ENCODE measurements at regions of chr20 and their contacts with region 1.

Region 1: DNA sequence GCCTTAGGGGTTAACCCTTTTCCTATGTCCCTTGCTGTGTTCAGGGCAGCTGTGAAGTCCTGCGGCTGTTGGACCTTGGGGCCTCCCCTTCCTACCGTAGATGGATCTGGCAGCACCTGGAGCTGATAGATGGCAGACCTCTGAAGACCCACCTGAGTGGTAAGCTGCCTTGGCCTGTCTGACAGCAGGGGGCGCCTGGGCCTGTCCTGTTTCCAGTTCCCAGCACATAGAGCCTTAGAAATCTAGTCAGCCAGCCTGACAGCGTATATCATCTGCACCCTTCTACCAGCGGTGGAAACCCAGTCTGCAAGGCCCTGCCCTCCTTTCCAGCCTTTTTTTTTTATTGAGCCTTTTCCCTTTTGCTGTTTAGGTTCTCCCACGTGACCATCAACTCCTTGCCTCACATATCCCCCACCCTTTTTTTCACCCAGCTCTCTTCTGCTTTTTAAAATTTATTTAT is 26.6 kb downstream of the CNBD2 start:
- DNase-seq: peak; percentile 84
- ATAC-seq: peak; percentile 95
- H3K4me3 ChIP-seq: no peak overlapping the region
- H3K27ac ChIP-seq: no peak overlapping the region
- H3K4me1 ChIP-seq: peaks cover 2 to 23% of the 10 kb centered on the region in 2 experiments; a peak in 3 of 4 replicates
- H3K27me3 ChIP-seq: no peaks in the 10 kb centered on the region
- CTCF ChIP-seq: peak; percentile 94 to 95 (median 95)
- POLR2A ChIP-seq: no peak
- RAD21 ChIP-seq: peak; percentile 97

Region 2: GRCh38 chr20:35741892-35742740 is 252.9 kb before region 1 on chr20 and contains the start of gene RBM39:
- CTCF ChIA-PET with region 1: interaction called, 10 read pairs
- POLR2A ChIA-PET with region 1: interaction called, 7 read pairs
- RAD21 ChIA-PET with region 1: no interaction called
- intact Hi-C with region 1: no loop called
- DNase-seq: peak; percentile 100
- ATAC-seq: peak; percentile 94
- H3K4me3 ChIP-seq: peak within 1 kb of the TSS; percentile 77 to 97
- H3K27ac ChIP-seq: peak within 1 kb of the TSS; percentile 91
- H3K4me1 ChIP-seq: peaks cover 10 to 28% of the 10 kb centered on the region in 2 experiments
- H3K27me3 ChIP-seq: no peaks in the 10 kb centered on the region
- CTCF ChIP-seq: peak in 1 of 3 experiments; percentile 38; a peak in 1 of 6 replicates
- POLR2A ChIP-seq: peak; percentile 70
- RAD21 ChIP-seq: no peak
- total RNA-seq, gene RBM39: 234 TPM

Region 3: DNA sequence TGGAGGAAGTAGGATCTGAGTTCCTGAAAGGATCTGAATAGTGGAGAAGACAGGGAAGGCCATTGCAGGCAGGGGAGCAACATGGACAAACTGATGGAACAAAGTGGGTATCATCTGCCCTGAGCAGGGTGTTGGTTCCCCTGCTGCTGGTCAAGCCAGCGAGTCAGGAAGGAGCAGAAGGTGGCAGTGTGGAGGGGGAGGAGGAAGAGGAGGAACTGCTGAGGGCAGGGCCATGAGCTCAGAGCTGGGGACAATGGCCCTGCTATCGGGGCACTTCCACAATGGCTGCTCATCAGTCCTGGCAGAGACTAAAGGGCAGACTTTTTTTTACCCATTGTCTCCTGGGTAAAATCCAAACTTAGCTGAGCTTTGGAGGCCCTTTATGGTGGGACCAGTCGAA is 13.1 kb before region 1 on chr20:
- CTCF ChIA-PET with region 1: interaction called, 15 read pairs
- POLR2A ChIA-PET with region 1: no interaction called
- RAD21 ChIA-PET with region 1: no interaction called
- intact Hi-C with region 1: no loop called
- DNase-seq: no peak
- ATAC-seq: peak; percentile 50; the same call in 1 of the 2 replicates
- H3K4me3 ChIP-seq: no peak overlapping the region
- H3K27ac ChIP-seq: no peak overlapping the region
- H3K4me1 ChIP-seq: peaks cover 0 to 5% of the 10 kb centered on the region in 2 experiments; a peak in 2 of 4 replicates
- H3K27me3 ChIP-seq: no peaks in the 10 kb centered on the region
- CTCF ChIP-seq: no peak
- POLR2A ChIP-seq: no peak
- RAD21 ChIP-seq: no peak

Region 4: DNA sequence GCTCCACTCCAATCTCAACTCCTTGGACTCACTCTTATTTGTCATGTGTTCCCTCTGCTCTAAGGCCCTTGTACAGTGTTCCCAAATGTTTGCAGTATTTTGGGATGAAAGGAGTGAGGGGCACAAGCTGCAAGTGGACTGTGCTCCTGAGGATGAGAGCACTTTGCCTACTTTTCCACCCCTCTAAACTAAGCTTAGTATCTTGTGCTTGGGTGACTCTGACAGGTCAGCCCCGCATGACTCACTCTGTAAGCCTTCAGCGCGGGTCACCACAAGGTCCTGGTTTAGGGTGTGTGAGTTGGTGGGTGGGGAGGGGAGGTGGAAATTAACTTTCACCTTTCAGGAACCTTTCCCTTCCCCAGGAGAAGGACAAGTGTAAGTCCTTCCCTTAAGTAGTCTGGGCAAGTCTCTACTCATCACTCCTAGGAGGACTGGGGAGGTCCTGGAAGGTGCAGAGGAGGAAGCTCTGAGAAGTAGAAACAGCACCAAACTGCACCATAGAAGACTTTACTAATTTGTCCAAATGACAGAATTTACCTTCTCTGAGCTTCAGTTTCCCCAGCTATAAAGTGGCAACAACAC is 90.8 kb after region 1 on chr20:
- CTCF ChIA-PET with region 1: interaction called, 10 read pairs
- POLR2A ChIA-PET with region 1: interaction called, 4 read pairs
- RAD21 ChIA-PET with region 1: interaction called in 1 of 2 experiments, 3 read pairs
- intact Hi-C with region 1: no loop called
- DNase-seq: peak; percentile 84
- ATAC-seq: peak; percentile 83
- H3K4me3 ChIP-seq: peak overlapping the region; percentile 8 to 46
- H3K27ac ChIP-seq: peak overlapping the region; percentile 96
- H3K4me1 ChIP-seq: peaks cover 56 to 79% of the 10 kb centered on the region in 2 experiments
- H3K27me3 ChIP-seq: no peaks in the 10 kb centered on the region
- CTCF ChIP-seq: no peak
- POLR2A ChIP-seq: no peak
- RAD21 ChIP-seq: 0 out of 2 replicates have a peak, but pooled peaks have one; percentile 15

Region 5: DNA sequence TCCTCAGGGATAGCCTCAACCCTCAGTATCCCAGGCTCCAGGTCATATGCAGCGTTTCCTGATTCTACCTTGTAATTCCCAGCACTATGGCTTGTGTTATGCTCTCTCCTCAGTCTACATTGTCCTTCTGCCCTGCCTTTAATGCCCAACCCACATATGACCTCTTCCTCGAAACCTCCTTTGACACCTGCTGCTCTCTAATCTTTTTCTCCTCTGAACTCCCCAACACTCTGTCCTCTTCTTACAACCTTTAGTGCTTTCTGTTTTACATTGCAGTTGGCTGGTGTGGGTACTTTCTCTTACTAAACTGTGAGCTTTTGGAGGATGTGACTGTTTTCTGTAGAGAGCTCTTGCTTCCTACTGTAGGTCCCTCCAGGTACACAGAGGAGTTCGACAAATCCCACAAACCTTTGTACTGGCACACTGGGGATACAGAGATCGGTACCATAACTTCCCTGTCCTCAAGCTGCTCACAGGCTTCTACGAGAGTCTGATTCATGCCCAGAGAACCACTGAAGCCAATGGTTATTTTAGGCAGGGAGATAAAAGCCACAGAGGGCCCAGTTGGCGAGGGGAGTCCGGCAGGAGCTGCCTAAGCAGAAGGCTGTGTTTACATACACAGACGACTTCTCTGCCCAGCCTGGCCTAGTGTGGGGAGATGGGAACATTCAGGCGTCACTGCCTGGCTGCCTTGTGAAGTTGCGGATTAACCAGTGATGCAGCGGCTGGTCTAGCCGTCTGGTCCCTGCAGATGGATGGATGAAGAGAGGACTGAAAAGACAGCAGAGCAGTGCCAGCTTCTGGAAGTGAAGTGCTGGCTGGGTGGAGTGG is 151.1 kb after region 1 on chr20:
- CTCF ChIA-PET with region 1: interaction called, 442 read pairs
- POLR2A ChIA-PET with region 1: no interaction called
- RAD21 ChIA-PET with region 1: no interaction called
- intact Hi-C with region 1: no loop called
- DNase-seq: no peak
- ATAC-seq: no peak
- H3K4me3 ChIP-seq: no peak overlapping the region
- H3K27ac ChIP-seq: no peak overlapping the region
- H3K4me1 ChIP-seq: peaks cover 5 to 13% of the 10 kb centered on the region in 2 experiments; a peak in 3 of 4 replicates
- H3K27me3 ChIP-seq: no peaks in the 10 kb centered on the region
- CTCF ChIP-seq: no peak
- POLR2A ChIP-seq: no peak
- RAD21 ChIP-seq: no peak

Region 6: GRCh38 chr20:36199345-36200257 is 204.6 kb after region 1 on chr20:
- CTCF ChIA-PET with region 1: interaction called, 27 read pairs
- POLR2A ChIA-PET with region 1: no interaction called
- RAD21 ChIA-PET with region 1: interaction called in 1 of 2 experiments, 8 read pairs
- intact Hi-C with region 1: loop called (anchors 1 kb)
- DNase-seq: peak; percentile 45
- ATAC-seq: peak; percentile 91
- H3K4me3 ChIP-seq: no peak overlapping the region
- H3K27ac ChIP-seq: no peak overlapping the region
- H3K4me1 ChIP-seq: no peaks in the 10 kb centered on the region
- H3K27me3 ChIP-seq: no peaks in the 10 kb centered on the region
- CTCF ChIP-seq: peak; percentile 83 to 91 (median 88)
- POLR2A ChIP-seq: no peak
- RAD21 ChIP-seq: peak; percentile 89